Mammary epithelial cell (primary cell): ENCODE measurements at regions of chr5 and their contacts with region 1.

Region 1: GRCh38 chr5:109907731-109908130 is 218.0 kb downstream of the MAN2A1 start:
- DNase-seq: peak; percentile 69
- H3K4me3 ChIP-seq: no peak overlapping the region
- H3K27ac ChIP-seq: no peak overlapping the region
- H3K4me1 ChIP-seq: peaks cover 9% of the 10 kb centered on the region
- H3K27me3 ChIP-seq: no peaks in the 10 kb centered on the region
- CTCF ChIP-seq: peak in 1 of 2 donors; percentile 2

Region 2: GRCh38 chr5:109945097-109945678 is 37.5 kb after region 1 on chr5:
- CTCF ChIA-PET with region 1: no interaction called
- dilution Hi-C with region 1: no loop called
- in situ Hi-C with region 1: no loop called
- intact Hi-C with region 1: no loop called
- DNase-seq: no peak
- H3K4me3 ChIP-seq: no peak overlapping the region
- H3K27ac ChIP-seq: no peak overlapping the region
- H3K4me1 ChIP-seq: no peaks in the 10 kb centered on the region
- H3K27me3 ChIP-seq: no peaks in the 10 kb centered on the region
- CTCF ChIP-seq: no peak

Region 3: DNA sequence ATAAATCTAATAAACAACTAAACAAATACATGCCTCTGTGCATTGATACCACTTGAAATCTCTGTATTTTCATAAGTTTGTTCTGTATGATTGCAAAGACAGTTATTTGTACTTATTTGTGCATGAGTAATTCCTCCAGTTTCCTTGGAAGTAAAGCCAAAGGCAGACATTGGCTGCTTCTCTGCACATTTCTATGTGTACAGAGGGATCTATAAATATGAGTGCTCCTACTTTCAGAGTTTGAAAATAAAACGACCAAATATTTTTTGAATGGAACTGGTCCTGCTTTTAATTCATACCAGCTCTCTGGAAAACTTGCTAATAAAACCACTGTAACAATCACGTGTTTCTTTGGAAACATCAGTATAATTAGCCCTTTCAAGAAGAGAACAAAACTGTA is 88.5 kb after region 1 on chr5:
- CTCF ChIA-PET with region 1: no interaction called
- dilution Hi-C with region 1: loop called (anchors 5 kb)
- in situ Hi-C with region 1: no loop called
- intact Hi-C with region 1: no loop called
- DNase-seq: no peak
- H3K4me3 ChIP-seq: no peak overlapping the region
- H3K27ac ChIP-seq: no peak overlapping the region
- H3K4me1 ChIP-seq: no peaks in the 10 kb centered on the region
- H3K27me3 ChIP-seq: no peaks in the 10 kb centered on the region
- CTCF ChIP-seq: no peak